ENCODE measurements at regions of chr1 and their contacts with region 1.

Region 1: DNA sequence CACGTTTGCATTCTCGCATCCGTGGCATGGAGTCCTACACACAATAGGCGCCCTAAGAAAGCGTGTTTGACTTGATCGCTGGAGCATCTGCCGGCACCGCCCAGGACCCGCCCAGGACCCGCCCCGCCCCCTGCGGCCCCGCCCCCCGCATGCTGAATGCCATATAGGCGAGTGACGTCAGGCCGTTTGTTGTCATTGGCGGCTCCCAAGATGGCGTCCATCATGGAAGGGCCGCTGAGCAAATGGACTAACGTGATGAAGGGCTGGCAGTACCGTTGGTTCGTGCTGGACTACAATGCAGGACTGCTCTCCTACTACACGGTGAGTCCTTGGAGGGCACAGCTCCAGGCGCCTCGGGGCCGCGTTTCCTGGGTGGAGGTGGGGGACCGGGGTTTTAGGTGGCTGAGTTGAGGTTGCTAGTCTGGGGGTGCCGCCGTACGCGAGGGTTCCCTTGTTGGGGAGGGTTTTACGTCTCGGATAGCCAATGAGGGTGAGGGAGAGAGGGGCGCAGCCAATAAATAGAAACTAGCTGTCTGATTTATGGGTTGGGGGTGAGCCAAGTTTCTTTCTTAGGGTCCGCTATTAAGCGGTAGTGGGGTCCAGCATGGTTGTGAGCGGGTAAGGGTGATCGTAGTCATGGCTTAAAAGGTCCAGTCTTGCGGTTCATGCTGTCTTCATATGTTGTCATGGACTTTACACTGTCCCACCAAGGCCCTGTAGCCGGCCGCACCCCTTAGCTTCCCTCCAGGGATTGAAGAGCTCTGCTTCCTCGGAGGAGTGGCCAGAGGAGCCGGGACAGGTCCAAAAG is at the start of gene OSBPL9:
- DNase-seq: peak; percentile 69 to 94
- H3K4me3 ChIP-seq: peak within 1 kb of the TSS; percentile 81 to 86
- H3K27ac ChIP-seq: peak within 1 kb of the TSS; percentile 91 to 92
- H3K4me1 ChIP-seq: peaks cover 0 to 16% of the 10 kb centered on the region in 2 donors
- H3K27me3 ChIP-seq: no peaks in the 10 kb centered on the region
- CTCF ChIP-seq: no peak
- total RNA-seq, gene OSBPL9: 101 TPM

Region 2: GRCh38 chr1:50968158-50968820 is 648.8 kb before region 1 on chr1:
- intact Hi-C with region 1: loop called (anchors 5 kb)
- DNase-seq: peak; percentile 40 to 93
- H3K4me3 ChIP-seq: peak overlapping the region; percentile 80 to 93
- H3K27ac ChIP-seq: peak overlapping the region; percentile 95 to 98
- H3K4me1 ChIP-seq: no peaks in the 10 kb centered on the region
- H3K27me3 ChIP-seq: no peaks in the 10 kb centered on the region
- CTCF ChIP-seq: peak; percentile 5 to 57 (median 38)

Region 3: GRCh38 chr1:51519048-51519864 is 97.8 kb before region 1 on chr1 and contains the start of gene EPS15:
- intact Hi-C with region 1: loop called (anchors 2 kb)
- DNase-seq: peak; percentile 55 to 91
- H3K4me3 ChIP-seq: peak within 1 kb of the TSS; percentile 95 to 98
- H3K27ac ChIP-seq: peak within 1 kb of the TSS; percentile 86 to 93
- H3K4me1 ChIP-seq: peaks cover 3 to 16% of the 10 kb centered on the region in 2 donors
- H3K27me3 ChIP-seq: no peaks in the 10 kb centered on the region
- CTCF ChIP-seq: no peak
- total RNA-seq, gene EPS15: 44.6 TPM

Region 4: GRCh38 chr1:51636764-51637522 is 19.8 kb after region 1 on chr1:
- intact Hi-C with region 1: loop called (anchors 2 kb)
- DNase-seq: peak; percentile 47 to 92
- H3K4me3 ChIP-seq: no peak overlapping the region
- H3K27ac ChIP-seq: peak overlapping the region; percentile 72 to 87
- H3K4me1 ChIP-seq: peaks cover 2 to 55% of the 10 kb centered on the region in 2 donors
- H3K27me3 ChIP-seq: no peaks in the 10 kb centered on the region
- CTCF ChIP-seq: no peak

Region 5: GRCh38 chr1:51736702-51737101 is 119.6 kb after region 1 on chr1:
- intact Hi-C with region 1: loop called (anchors 5 kb)
- DNase-seq: no peak
- H3K4me3 ChIP-seq: no peak overlapping the region
- H3K27ac ChIP-seq: peak overlapping the region; percentile 0 to 44
- H3K4me1 ChIP-seq: peaks cover 0 to 31% of the 10 kb centered on the region in 2 donors
- H3K27me3 ChIP-seq: no peaks in the 10 kb centered on the region
- CTCF ChIP-seq: no peak

Region 6: DNA sequence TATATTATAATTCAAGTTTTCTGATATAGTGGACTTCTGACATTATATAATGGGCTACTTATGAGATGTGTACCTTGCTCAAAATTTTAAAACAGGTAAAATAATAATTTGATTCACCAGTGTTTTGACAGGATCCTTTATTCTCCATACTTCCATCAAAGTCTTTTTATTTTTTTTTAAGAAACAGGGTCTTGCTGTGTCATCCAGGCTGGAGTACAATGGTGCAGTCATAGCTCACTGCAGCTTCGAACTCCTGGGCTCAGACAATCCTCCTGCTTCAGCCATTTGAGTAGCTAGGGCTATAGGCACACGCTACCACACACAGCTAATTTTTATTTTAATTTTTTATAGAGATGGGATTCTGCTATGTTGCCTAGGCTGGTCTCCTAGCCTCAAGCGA is 132.0 kb after region 1 on chr1:
- intact Hi-C with region 1: no loop called
- DNase-seq: no peak
- H3K4me3 ChIP-seq: no peak overlapping the region
- H3K27ac ChIP-seq: no peak overlapping the region
- H3K4me1 ChIP-seq: peaks cover 0 to 8% of the 10 kb centered on the region in 2 donors
- H3K27me3 ChIP-seq: no peaks in the 10 kb centered on the region
- CTCF ChIP-seq: no peak

Region 7: GRCh38 chr1:51878616-51879336 is 261.7 kb after region 1 on chr1 and contains the start of gene NRDC:
- intact Hi-C with region 1: loop called (anchors 5 kb)
- DNase-seq: peak; percentile 99 to 100
- H3K4me3 ChIP-seq: peak within 1 kb of the TSS; percentile 71 to 83
- H3K27ac ChIP-seq: peak within 1 kb of the TSS; percentile 94 to 99
- H3K4me1 ChIP-seq: peaks cover 5 to 27% of the 10 kb centered on the region in 2 donors
- H3K27me3 ChIP-seq: no peaks in the 10 kb centered on the region
- CTCF ChIP-seq: no peak
- total RNA-seq, gene NRDC: 40.0 TPM

Measured in ascending aorta (tissue), 2 donors.